ENCODE measurements at regions of chr7 and their contacts with region 1.

Region 1: GRCh38 chr7:138161600-138162081 is 85.4 kb downstream of the AKR1D1 start:
- DNase-seq: peak in 1 of 2 donors; percentile 39
- H3K4me3 ChIP-seq: no peak overlapping the region
- CTCF ChIP-seq: no peak
- POLR2A ChIP-seq: no peak

Region 2: DNA sequence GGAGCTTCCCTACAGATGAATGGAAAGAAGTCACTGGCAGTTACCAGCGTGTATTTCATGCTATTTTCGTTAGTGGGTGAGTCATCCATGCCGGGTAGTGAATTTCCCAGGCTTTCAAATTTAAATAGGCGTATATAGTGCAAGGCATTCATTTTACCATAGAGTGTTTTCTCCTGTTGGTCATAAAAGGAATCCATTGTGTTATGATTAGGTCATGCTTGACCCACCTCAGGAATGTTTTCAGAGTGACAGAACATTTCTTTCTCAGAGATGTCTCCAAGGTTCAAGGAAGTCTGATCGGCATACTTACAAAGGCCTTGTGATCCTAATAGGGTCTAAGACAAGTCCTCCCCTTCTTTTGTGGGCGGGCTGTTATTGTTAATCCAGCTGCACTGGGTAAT is 25.3 kb after region 1 on chr7:
- intact Hi-C with region 1: loop called (anchors 2 kb)
- DNase-seq: no peak
- H3K4me3 ChIP-seq: no peak overlapping the region
- CTCF ChIP-seq: no peak
- POLR2A ChIP-seq: no peak

Measured in lower leg skin (tissue), 4 donors.